ENCODE measurements at regions of chr5 and their contacts with region 1.

Region 1: DNA sequence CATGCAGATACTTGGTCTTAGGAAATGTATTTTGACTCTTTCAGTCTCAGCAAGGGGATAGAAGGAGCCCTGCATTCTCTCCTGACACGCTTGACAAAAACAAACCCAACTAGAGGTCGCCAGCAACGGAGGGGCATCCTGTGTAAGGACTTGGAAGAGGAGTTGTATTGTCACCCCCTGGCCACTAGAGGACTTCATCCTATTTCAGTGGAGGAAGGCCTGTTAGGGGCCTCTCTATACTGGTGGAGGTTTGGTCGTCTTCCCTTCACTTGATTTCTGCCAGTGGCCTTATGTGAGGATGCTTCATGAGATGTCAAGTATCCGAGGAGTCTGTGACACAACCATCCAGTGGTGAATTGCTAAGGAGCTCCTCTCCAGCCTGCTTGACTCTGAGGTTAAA is 122.8 kb upstream of the STC2 start:
- DNase-seq: no peak
- H3K4me3 Mint-ChIP-seq: no peak overlapping the region
- H3K27ac Mint-ChIP-seq: peak overlapping the region; percentile 86
- H3K4me1 Mint-ChIP-seq: peaks cover 48% of the 10 kb centered on the region
- H3K27me3 Mint-ChIP-seq: no peaks in the 10 kb centered on the region
- CTCF ChIP-seq: peak; percentile 53

Region 2: GRCh38 chr5:173278172-173278571 is 172.9 kb before region 1 on chr5:
- CTCF ChIA-PET with region 1: no interaction called
- intact Hi-C with region 1: no loop called
- DNase-seq: no peak
- H3K4me3 Mint-ChIP-seq: no peak overlapping the region
- H3K27ac Mint-ChIP-seq: no peak overlapping the region
- H3K4me1 Mint-ChIP-seq: no peaks in the 10 kb centered on the region
- H3K27me3 Mint-ChIP-seq: peaks cover 99% of the 10 kb centered on the region
- CTCF ChIP-seq: no peak

Region 3: GRCh38 chr5:173472141-173472543 is 21.1 kb after region 1 on chr5:
- CTCF ChIA-PET with region 1: interaction called, 13 read pairs
- intact Hi-C with region 1: no loop called
- DNase-seq: peak; percentile 66
- H3K4me3 Mint-ChIP-seq: no peak overlapping the region
- H3K27ac Mint-ChIP-seq: peak overlapping the region; percentile 94
- H3K4me1 Mint-ChIP-seq: peaks cover 29% of the 10 kb centered on the region
- H3K27me3 Mint-ChIP-seq: no peaks in the 10 kb centered on the region
- CTCF ChIP-seq: no peak

Region 4: GRCh38 chr5:173513521-173513991 is 62.5 kb after region 1 on chr5:
- CTCF ChIA-PET with region 1: interaction called, 4 read pairs
- intact Hi-C with region 1: loop called (anchors 2 kb)
- DNase-seq: no peak
- H3K4me3 Mint-ChIP-seq: no peak overlapping the region
- H3K27ac Mint-ChIP-seq: peak overlapping the region; percentile 38
- H3K4me1 Mint-ChIP-seq: peaks cover 22% of the 10 kb centered on the region
- H3K27me3 Mint-ChIP-seq: no peaks in the 10 kb centered on the region
- CTCF ChIP-seq: no peak

Region 5: GRCh38 chr5:173573126-173573960 is 122.3 kb after region 1 on chr5:
- CTCF ChIA-PET with region 1: no interaction called
- intact Hi-C with region 1: loop called (anchors 5 kb)
- DNase-seq: peak; percentile 88
- H3K4me3 Mint-ChIP-seq: peak overlapping the region; percentile 37
- H3K27ac Mint-ChIP-seq: no peak overlapping the region
- H3K4me1 Mint-ChIP-seq: peaks cover 11% of the 10 kb centered on the region
- H3K27me3 Mint-ChIP-seq: peaks cover 32% of the 10 kb centered on the region
- CTCF ChIP-seq: peak; percentile 96

Measured in Calu3 (cell line).